ENCODE measurements at regions of chr4 and their contacts with region 1.

Region 1: GRCh38 chr4:139083956-139084803 is 68.6 kb downstream of the NOCT start:
- DNase-seq: peak; percentile 85
- ATAC-seq: peak; percentile 62
- H3K4me3 ChIP-seq: peak overlapping the region; percentile 85
- H3K27ac ChIP-seq: peak overlapping the region; percentile 90
- H3K4me1 ChIP-seq: peaks cover 13% of the 10 kb centered on the region; the same call in 1 of the 2 replicates
- H3K27me3 ChIP-seq: no peaks in the 10 kb centered on the region
- CTCF ChIP-seq: no peak

Region 2: GRCh38 chr4:139030614-139031235 is 53.5 kb before region 1 on chr4:
- CTCF ChIA-PET with region 1: interaction called, 9 read pairs
- POLR2A ChIA-PET with region 1: no interaction called
- intact Hi-C with region 1: loop called (anchors 1 kb)
- DNase-seq: peak; percentile 72
- ATAC-seq: peak; percentile 68
- H3K4me3 ChIP-seq: no peak overlapping the region
- H3K27ac ChIP-seq: no peak overlapping the region
- H3K4me1 ChIP-seq: no peaks in the 10 kb centered on the region
- H3K27me3 ChIP-seq: no peaks in the 10 kb centered on the region
- CTCF ChIP-seq: peak; percentile 74

Region 3: DNA sequence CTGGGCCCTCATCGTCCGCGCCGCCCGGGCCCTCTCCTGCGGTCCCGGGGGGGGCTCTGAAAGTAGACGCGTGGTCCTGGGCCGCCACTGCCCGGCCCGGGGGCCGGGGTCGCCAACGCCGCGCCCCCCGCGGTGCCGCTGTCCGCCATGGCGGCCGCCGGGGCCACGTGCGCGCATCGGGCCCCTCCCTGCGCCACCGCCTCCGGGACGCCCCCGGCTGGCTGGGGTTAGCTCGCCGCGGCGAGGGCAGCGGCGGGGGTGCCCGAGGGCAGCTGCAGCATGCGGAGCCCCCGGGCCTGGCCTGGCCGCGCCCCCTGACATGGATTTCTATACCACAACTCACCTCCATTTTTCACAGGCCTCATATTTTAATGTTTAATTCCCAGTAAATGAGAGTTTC is 31.0 kb after region 1 on chr4:
- CTCF ChIA-PET with region 1: no interaction called
- POLR2A ChIA-PET with region 1: no interaction called
- intact Hi-C with region 1: no loop called
- DNase-seq: no peak
- ATAC-seq: no peak
- H3K4me3 ChIP-seq: no peak overlapping the region
- H3K27ac ChIP-seq: no peak overlapping the region
- H3K4me1 ChIP-seq: no peaks in the 10 kb centered on the region
- H3K27me3 ChIP-seq: no peaks in the 10 kb centered on the region
- CTCF ChIP-seq: no peak

Region 4: GRCh38 chr4:139177868-139178611 is 93.9 kb after region 1 on chr4:
- CTCF ChIA-PET with region 1: no interaction called
- POLR2A ChIA-PET with region 1: interaction called, 4 read pairs
- intact Hi-C with region 1: loop called (anchors 5 kb)
- DNase-seq: peak; percentile 90
- ATAC-seq: peak; percentile 72
- H3K4me3 ChIP-seq: peak overlapping the region; percentile 95
- H3K27ac ChIP-seq: peak overlapping the region; percentile 44
- H3K4me1 ChIP-seq: peaks cover 9% of the 10 kb centered on the region
- H3K27me3 ChIP-seq: no peaks in the 10 kb centered on the region
- CTCF ChIP-seq: no peak

Region 5: DNA sequence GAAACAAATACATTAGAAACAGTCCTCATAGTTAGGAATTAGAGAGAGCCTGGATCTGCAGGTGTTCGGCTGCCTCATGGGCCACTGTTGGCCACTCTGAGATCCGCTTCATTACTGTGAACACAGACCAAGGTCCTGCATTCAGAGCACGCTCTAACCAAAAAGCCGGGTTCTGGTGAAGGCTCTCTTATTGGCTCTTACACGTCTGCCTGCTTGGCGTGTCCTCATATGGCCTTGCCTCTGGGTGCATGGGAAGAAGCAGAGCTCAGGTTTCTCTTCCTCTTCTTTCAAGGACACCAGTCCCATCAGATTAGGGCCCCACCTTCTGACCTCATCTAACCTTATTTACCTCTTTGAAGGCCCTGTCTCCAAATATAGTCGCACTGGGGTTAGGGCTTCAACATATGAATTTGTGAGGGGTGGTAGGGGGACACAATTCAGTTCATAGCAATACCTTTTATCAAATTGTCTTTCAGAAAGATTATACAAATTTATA is 129.9 kb after region 1 on chr4:
- CTCF ChIA-PET with region 1: no interaction called
- POLR2A ChIA-PET with region 1: no interaction called
- intact Hi-C with region 1: no loop called
- DNase-seq: no peak
- ATAC-seq: no peak
- H3K4me3 ChIP-seq: no peak overlapping the region
- H3K27ac ChIP-seq: no peak overlapping the region
- H3K4me1 ChIP-seq: no peaks in the 10 kb centered on the region
- H3K27me3 ChIP-seq: no peaks in the 10 kb centered on the region
- CTCF ChIP-seq: no peak

Region 6: GRCh38 chr4:139301113-139301820 is 217.1 kb after region 1 on chr4 and contains the start of gene NAA15:
- CTCF ChIA-PET with region 1: no interaction called
- POLR2A ChIA-PET with region 1: interaction called, 5 read pairs
- intact Hi-C with region 1: loop called (anchors 5 kb)
- DNase-seq: peak; percentile 92
- ATAC-seq: peak; percentile 79
- H3K4me3 ChIP-seq: peak within 1 kb of the TSS; percentile 99
- H3K27ac ChIP-seq: peak within 1 kb of the TSS; percentile 74
- H3K4me1 ChIP-seq: peaks cover 31% of the 10 kb centered on the region
- H3K27me3 ChIP-seq: no peaks in the 10 kb centered on the region
- CTCF ChIP-seq: no peak
- total RNA-seq, gene NAA15: 40.0 and 41.0 TPM in 2 replicates